CD8-positive, alpha-beta T cell (primary cell): ENCODE measurements at regions of chr14 and their contacts with region 1.

Region 1: DNA sequence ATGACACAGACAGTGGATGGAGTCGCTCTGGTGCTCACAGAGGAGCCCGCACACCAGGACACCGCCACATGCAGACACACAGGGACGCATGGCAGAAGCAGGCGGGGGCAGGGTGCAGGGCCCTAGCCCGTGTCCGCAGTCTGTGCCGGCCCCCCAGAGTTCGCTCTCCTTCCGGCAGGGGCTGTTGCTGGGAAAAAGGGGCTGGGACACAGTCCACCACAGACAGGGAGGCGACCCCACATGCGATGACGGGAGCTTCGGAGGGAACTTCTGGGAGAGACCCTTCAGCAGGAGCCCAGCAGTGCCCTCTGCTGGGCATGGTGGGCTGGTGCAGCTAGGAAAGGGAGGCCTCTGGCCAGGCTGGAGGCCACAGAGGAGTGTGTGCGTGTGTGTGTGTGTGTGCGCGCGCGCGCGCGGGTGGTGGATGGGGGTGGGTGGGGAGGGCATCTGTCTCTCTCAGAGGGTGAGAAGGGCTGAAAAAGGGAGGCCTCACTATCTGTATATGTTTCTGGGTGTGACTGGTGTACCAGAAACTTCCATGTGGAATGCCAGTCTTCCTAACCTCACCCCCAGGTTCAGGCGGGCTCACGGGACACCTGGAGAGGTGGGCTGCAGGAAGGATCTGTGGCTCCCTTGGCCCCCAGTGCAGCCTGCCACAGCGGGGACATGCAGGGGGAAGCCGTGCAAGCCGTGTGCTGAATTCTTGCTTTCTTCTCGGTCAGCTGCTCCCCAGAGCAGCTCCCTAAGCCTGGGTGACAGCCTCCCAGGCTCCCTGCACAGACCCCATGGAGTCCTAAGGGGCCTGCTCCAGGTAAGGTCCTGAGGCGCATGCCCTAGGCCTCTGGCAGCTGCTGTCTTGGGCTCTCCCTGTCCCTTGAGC is 60.7 kb downstream of the PLEKHG3 start:
- DNase-seq: peak; percentile 38 to 82 (median 60)
- ATAC-seq: peak; percentile 91
- H3K4me3 ChIP-seq: peak overlapping the region in 1 of 2 experiments; percentile 28
- H3K4me3 Mint-ChIP-seq: peak overlapping the region; percentile 50
- H3K27ac ChIP-seq: no peak overlapping the region
- H3K27ac Mint-ChIP-seq: no peak overlapping the region
- H3K4me1 ChIP-seq: peaks cover 5% of the 10 kb centered on the region
- H3K4me1 Mint-ChIP-seq: peaks cover 14% of the 10 kb centered on the region
- H3K27me3 ChIP-seq: no peaks in the 10 kb centered on the region
- H3K27me3 Mint-ChIP-seq: no peaks in the 10 kb centered on the region
- CTCF ChIP-seq: peak; percentile 79

Region 2: GRCh38 chr14:64345513-64345912 is 419.4 kb before region 1 on chr14:
- CTCF ChIA-PET with region 1: interaction called, 3 read pairs
- POLR2A ChIA-PET with region 1: no interaction called
- intact Hi-C with region 1: loop called in 1 of 2 experiments (anchors 2 kb)
- DNase-seq: no peak
- ATAC-seq: no peak
- H3K4me3 ChIP-seq: no peak overlapping the region
- H3K4me3 Mint-ChIP-seq: no peak overlapping the region
- H3K27ac ChIP-seq: no peak overlapping the region
- H3K27ac Mint-ChIP-seq: no peak overlapping the region
- H3K4me1 ChIP-seq: no peaks in the 10 kb centered on the region
- H3K4me1 Mint-ChIP-seq: no peaks in the 10 kb centered on the region
- H3K27me3 ChIP-seq: no peaks in the 10 kb centered on the region
- H3K27me3 Mint-ChIP-seq: no peaks in the 10 kb centered on the region
- CTCF ChIP-seq: no peak

Region 3: DNA sequence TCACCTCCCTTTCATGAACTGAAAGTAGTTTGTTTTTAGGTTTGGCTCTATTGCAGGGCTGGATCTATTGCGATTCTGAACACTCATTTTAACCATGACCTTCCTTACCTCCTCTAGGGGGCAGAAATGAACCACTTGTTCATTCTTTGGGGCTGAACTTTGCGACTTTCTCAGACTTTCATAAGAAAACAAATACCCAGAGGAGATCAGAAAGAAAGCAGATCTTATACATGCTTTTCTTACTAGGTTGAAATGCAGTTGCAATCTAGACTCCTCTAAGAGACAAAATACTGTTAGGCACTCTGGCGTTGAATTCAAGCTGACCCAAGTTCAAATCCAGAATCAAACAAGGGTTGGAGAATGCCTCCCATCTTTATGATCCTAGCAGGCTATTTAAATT is 93.3 kb before region 1 on chr14:
- CTCF ChIA-PET with region 1: interaction called, 13 read pairs
- POLR2A ChIA-PET with region 1: interaction called, 3 read pairs
- intact Hi-C with region 1: loop called (anchors 1 kb)
- DNase-seq: peak in 2 of 9 experiments; percentile 68 to 76
- ATAC-seq: peak; percentile 55
- H3K4me3 ChIP-seq: no peak overlapping the region
- H3K4me3 Mint-ChIP-seq: no peak overlapping the region
- H3K27ac ChIP-seq: no peak overlapping the region
- H3K27ac Mint-ChIP-seq: no peak overlapping the region
- H3K4me1 ChIP-seq: peaks cover 7% of the 10 kb centered on the region
- H3K4me1 Mint-ChIP-seq: peaks cover 15% of the 10 kb centered on the region
- H3K27me3 ChIP-seq: no peaks in the 10 kb centered on the region
- H3K27me3 Mint-ChIP-seq: peaks cover 2% of the 10 kb centered on the region
- CTCF ChIP-seq: peak; percentile 56

Region 4: DNA sequence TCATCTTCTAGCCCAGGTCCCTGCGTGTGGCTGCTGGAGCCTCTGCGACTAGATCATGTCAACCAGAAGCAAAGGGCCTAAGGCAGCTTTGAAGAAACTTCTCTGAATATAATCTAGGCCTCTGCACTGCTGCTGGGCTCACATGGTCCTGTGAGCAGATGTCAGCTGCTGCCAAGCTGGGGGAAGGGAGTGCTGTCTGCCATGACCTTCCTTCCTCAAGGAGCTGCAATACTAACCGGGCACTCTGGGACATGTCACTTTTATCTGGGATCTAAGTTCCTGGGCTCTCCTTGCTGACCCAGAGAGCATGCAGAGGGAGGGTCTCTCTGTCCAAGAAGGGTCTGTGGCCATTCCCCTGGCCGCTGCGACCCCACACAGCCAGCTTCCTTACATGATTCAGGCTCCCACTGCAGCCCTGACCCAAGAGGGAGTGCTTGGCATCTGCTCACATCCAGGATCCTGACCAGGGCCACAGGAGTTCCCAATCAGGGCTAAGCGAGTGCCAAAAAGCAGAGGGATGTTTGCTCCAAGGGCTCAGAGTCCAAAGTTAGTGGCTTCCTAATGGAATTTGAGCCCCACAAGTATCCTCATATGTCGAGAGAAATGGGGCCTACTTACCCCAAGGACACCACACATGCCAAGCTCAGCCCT is 13.3 kb after region 1 on chr14:
- CTCF ChIA-PET with region 1: interaction called, 10 read pairs
- POLR2A ChIA-PET with region 1: no interaction called
- intact Hi-C with region 1: no loop called
- DNase-seq: no peak
- ATAC-seq: no peak
- H3K4me3 ChIP-seq: no peak overlapping the region
- H3K4me3 Mint-ChIP-seq: no peak overlapping the region
- H3K27ac ChIP-seq: no peak overlapping the region
- H3K27ac Mint-ChIP-seq: no peak overlapping the region
- H3K4me1 ChIP-seq: no peaks in the 10 kb centered on the region
- H3K4me1 Mint-ChIP-seq: no peaks in the 10 kb centered on the region
- H3K27me3 ChIP-seq: no peaks in the 10 kb centered on the region
- H3K27me3 Mint-ChIP-seq: no peaks in the 10 kb centered on the region
- CTCF ChIP-seq: no peak

Region 5: DNA sequence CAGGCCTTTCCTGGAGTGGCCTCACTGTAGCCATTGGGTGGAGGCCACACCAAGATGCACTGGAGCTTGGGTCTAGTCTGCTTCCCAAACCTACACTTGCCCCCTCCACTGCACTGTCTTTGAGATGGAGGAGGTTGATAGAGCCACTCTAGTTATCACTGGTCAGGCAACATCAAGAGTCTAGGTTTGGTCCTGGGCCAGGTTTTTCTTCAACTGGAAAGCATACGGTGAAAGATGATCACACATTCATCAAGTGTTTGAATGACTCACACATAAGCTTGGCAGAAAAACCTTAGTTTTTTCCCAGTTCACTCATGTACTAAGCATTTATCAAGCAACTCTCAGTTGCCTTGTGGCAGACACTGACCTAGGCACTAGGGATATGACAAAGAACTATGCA is 23.8 kb after region 1 on chr14:
- CTCF ChIA-PET with region 1: no interaction called
- POLR2A ChIA-PET with region 1: no interaction called
- intact Hi-C with region 1: no loop called
- DNase-seq: no peak
- ATAC-seq: no peak
- H3K4me3 ChIP-seq: no peak overlapping the region
- H3K4me3 Mint-ChIP-seq: no peak overlapping the region
- H3K27ac ChIP-seq: no peak overlapping the region
- H3K27ac Mint-ChIP-seq: no peak overlapping the region
- H3K4me1 ChIP-seq: no peaks in the 10 kb centered on the region
- H3K4me1 Mint-ChIP-seq: no peaks in the 10 kb centered on the region
- H3K27me3 ChIP-seq: no peaks in the 10 kb centered on the region
- H3K27me3 Mint-ChIP-seq: no peaks in the 10 kb centered on the region
- CTCF ChIP-seq: no peak